H1 (cell line): ENCODE measurements at regions of chr11 and their contacts with region 1.

Region 1: GRCh38 chr11:115990004-115990447 is 485.8 kb upstream of the CADM1 start:
- DNase-seq: peak in 1 of 2 experiments; percentile 90
- H3K4me3 ChIP-seq: no peak overlapping the region
- H3K27ac ChIP-seq: no peak overlapping the region
- H3K4me1 ChIP-seq: peaks cover 0 to 2% (median 0%) of the 10 kb centered on the region in 4 experiments; a peak in 2 of 7 replicates
- H3K27me3 ChIP-seq: no peaks in the 10 kb centered on the region
- CTCF ChIP-seq: peak; percentile 86 to 97 (median 96)
- EP300 ChIP-seq: no peak
- POLR2A ChIP-seq: no peak
- RAD21 ChIP-seq: peak; percentile 83 to 85

Region 2: GRCh38 chr11:115965767-115966504 is 24.1 kb before region 1 on chr11:
- CTCF ChIA-PET with region 1: interaction called, 11 read pairs
- POLR2A ChIA-PET with region 1: no interaction called
- DNase-seq: no peak
- H3K4me3 ChIP-seq: no peak overlapping the region
- H3K27ac ChIP-seq: no peak overlapping the region
- H3K4me1 ChIP-seq: peaks cover 2 to 8% (median 3%) of the 10 kb centered on the region in 4 experiments; a peak in 4 of 7 replicates
- H3K27me3 ChIP-seq: peaks cover 2 to 22% (median 13%) of the 10 kb centered on the region in 4 experiments
- CTCF ChIP-seq: no peak
- EP300 ChIP-seq: no peak
- POLR2A ChIP-seq: no peak
- RAD21 ChIP-seq: no peak

Region 3: DNA sequence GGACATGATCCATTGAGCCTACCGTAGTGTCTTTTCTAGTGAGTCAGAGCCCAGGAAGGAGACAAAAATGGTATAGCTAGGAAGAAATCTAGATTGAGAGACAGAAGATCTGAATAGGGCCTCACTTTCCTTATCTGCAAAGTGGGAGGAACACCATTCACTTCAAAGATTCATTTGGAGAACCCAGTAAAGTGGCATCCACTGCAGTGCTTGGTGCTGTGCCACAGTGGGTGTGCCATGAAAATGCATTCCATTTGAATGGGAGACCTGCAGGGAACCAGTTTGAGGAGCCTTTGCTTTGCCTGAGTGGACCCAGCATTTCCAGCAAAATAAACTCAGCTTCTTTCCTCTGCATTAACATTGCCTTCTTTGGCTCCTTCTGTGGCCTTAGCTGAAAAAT is 15.3 kb before region 1 on chr11:
- CTCF ChIA-PET with region 1: interaction called, 18 read pairs
- POLR2A ChIA-PET with region 1: no interaction called
- DNase-seq: no peak
- H3K4me3 ChIP-seq: peak overlapping the region in 3 of 4 experiments; percentile 28 to 52 (median 33); a peak in 4 of 8 replicates
- H3K27ac ChIP-seq: no peak overlapping the region
- H3K4me1 ChIP-seq: peaks cover 2 to 15% (median 8%) of the 10 kb centered on the region in 4 experiments; a peak in 5 of 7 replicates
- H3K27me3 ChIP-seq: peaks cover 8 to 30% (median 23%) of the 10 kb centered on the region in 4 experiments
- CTCF ChIP-seq: no peak
- EP300 ChIP-seq: no peak
- POLR2A ChIP-seq: no peak
- RAD21 ChIP-seq: no peak

Region 4: GRCh38 chr11:116035977-116036376 is 46.0 kb after region 1 on chr11:
- CTCF ChIA-PET with region 1: interaction called, 10 read pairs
- POLR2A ChIA-PET with region 1: no interaction called
- DNase-seq: no peak
- H3K4me3 ChIP-seq: no peak overlapping the region
- H3K27ac ChIP-seq: no peak overlapping the region
- H3K4me1 ChIP-seq: peaks cover 0 to 8% (median 3%) of the 10 kb centered on the region in 4 experiments; a peak in 5 of 7 replicates
- H3K27me3 ChIP-seq: no peaks in the 10 kb centered on the region
- CTCF ChIP-seq: no peak
- EP300 ChIP-seq: no peak
- POLR2A ChIP-seq: no peak
- RAD21 ChIP-seq: no peak

Region 5: GRCh38 chr11:116062490-116063171 is 72.6 kb after region 1 on chr11:
- CTCF ChIA-PET with region 1: interaction called, 10 read pairs
- POLR2A ChIA-PET with region 1: no interaction called
- DNase-seq: no peak
- H3K4me3 ChIP-seq: no peak overlapping the region
- H3K27ac ChIP-seq: no peak overlapping the region
- H3K4me1 ChIP-seq: peaks cover 0 to 11% (median 5%) of the 10 kb centered on the region in 4 experiments; a peak in 4 of 7 replicates
- H3K27me3 ChIP-seq: peaks cover 0 to 7% (median 3%) of the 10 kb centered on the region in 4 experiments; a peak in 4 of 7 replicates
- CTCF ChIP-seq: no peak
- EP300 ChIP-seq: no peak
- POLR2A ChIP-seq: no peak
- RAD21 ChIP-seq: no peak

Region 6: DNA sequence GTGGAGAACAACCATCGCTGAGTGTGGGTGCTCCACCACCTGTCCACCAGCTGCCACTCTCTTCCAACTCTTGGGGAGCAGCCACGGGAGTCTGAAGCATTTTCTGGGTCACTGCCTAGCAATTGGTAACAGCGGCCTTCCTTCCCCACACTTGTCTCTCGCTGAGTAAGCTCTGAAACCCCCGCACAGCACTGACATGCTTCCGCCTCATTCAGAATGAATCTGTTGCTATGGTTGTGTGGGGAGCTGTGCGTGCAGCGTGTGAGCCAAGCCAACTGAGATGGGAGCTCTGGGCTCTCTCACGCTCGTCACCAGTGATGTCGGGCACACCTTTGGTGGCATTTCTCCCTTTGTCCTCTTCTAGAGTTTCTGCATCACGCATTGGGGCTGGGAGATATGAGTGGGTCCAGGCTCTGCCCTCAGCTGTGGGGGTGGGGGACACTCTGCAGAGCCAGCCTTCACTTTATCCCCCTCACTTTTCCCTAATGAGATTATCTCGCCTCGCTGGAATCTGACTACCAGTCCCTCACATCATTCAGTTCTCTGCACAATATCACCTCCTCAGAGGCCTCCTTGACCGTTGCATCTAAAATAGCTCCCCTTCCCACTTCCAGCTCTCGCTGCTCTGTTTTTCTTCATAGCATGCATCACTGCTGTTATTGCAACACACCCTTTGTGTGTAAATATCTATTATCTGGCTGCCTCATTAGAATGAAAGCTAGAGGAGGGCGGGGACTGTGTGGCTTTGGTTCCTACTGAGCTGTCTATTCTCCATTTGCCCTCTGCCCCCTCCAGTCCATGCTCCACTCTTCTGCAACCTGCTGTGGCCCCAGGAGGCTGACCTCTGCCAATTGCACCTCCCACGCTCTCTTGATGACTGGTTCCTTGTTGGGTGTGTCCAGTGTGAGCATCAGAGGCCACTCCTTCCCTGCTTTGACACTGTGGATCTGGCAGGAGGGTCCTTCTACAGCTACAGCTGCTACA is 84.1 kb after region 1 on chr11:
- CTCF ChIA-PET with region 1: interaction called, 90 read pairs
- POLR2A ChIA-PET with region 1: no interaction called
- DNase-seq: no peak
- H3K4me3 ChIP-seq: no peak overlapping the region
- H3K27ac ChIP-seq: no peak overlapping the region
- H3K4me1 ChIP-seq: peaks cover 0 to 9% (median 3%) of the 10 kb centered on the region in 4 experiments; a peak in 4 of 7 replicates
- H3K27me3 ChIP-seq: peaks cover 0 to 6% (median 0%) of the 10 kb centered on the region in 4 experiments; a peak in 1 of 7 replicates
- CTCF ChIP-seq: no peak
- EP300 ChIP-seq: no peak
- POLR2A ChIP-seq: no peak
- RAD21 ChIP-seq: no peak

Region 7: DNA sequence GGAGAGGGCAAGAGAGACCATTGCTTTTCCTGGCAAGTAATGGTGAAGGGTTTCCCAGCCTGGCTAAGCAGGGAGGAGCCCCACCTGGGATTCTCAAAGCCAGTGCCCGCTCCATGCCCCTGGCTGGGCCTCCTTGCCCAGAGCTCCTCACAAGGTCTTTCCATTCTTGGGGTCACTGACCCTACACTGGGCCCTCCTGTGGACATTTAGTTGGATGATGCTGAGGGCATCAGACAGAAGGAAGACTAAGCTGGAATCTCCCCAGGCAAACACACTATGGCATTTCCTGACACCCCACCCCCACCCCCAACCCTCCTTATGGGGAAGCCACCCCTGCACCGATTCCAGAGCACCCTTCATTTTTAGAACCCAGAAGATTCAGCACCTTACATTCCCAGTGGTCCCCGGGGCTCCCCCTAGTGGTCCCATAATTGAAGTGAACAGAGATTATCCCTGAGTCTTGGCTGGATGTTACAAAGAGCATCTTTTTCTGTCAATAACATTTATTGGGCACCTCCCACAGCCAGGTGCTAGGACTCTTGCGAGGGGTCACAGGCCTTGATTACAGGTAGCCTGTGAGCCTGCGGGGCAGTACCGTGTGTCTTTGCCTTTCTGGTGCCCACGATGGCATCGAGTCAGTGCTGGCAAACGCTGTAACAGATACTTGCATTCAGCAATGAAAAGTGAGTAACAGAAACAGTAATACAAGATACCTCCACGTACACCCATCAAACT is 234.3 kb after region 1 on chr11:
- CTCF ChIA-PET with region 1: interaction called, 11 read pairs
- POLR2A ChIA-PET with region 1: no interaction called
- DNase-seq: peak in 1 of 2 experiments; percentile 81
- H3K4me3 ChIP-seq: no peak overlapping the region
- H3K27ac ChIP-seq: no peak overlapping the region
- H3K4me1 ChIP-seq: peaks cover 5 to 11% (median 7%) of the 10 kb centered on the region in 4 experiments; a peak in 5 of 7 replicates
- H3K27me3 ChIP-seq: no peaks in the 10 kb centered on the region; a peak in 1 of 7 replicates
- CTCF ChIP-seq: peak; percentile 43 to 72 (median 66)
- EP300 ChIP-seq: no peak
- POLR2A ChIP-seq: no peak
- RAD21 ChIP-seq: peak; percentile 52 to 68